ENCODE measurements at regions of chr2 and their contacts with region 1.

Region 1: DNA sequence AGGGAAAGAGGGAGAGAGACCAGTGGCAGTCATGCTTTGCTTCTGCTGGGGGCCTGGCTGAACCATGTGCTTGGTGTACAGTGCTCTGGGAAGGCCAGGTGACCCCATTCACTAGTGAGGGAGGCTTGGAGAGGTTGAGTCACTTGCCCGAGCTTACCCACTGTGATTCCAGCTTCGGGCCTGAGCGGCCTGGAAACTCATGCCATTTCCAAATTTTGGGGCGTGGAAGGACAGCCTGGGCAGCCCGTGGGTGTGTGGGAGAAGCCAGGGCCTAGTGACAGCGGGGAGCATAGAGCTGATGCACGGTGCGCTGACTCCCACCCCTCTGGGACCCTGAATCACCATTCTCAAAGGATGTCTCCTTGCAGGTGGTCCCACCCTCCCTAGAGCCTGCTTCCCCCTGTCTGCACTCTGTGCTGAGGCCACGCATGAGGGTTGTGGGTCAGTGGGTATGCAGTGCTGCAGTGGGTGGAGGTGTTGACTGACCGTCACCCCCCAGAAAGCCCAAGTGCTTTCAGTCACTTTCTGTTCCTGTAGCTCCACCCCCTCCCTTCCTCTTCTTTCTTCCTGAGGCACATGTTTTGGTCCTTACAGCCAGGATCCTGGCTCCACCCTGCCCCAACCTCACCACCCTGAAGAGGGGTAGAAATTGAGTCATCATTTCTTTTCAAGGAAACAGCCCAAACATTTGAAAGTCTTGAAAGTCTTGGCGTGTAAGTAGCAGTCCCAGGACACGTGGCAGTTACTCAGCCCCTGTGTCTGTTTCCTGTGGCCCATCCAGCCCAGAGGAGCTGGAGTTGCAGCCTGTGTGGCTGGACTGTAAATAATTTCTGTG is 69.3 kb upstream of the MCFD2 start:
- DNase-seq: peak; percentile 94
- ATAC-seq: peak; percentile 69
- H3K4me3 ChIP-seq: no peak overlapping the region; the same call in 1 of the 2 replicates
- H3K27ac ChIP-seq: peak overlapping the region; percentile 95
- H3K4me1 ChIP-seq: peaks cover 47% of the 10 kb centered on the region
- H3K27me3 ChIP-seq: no peaks in the 10 kb centered on the region
- CTCF ChIP-seq: no peak

Region 2: GRCh38 chr2:46814149-46814961 is 170.5 kb before region 1 on chr2:
- CTCF ChIA-PET with region 1: no interaction called
- POLR2A ChIA-PET with region 1: no interaction called
- intact Hi-C with region 1: no loop called
- DNase-seq: no peak
- ATAC-seq: no peak
- H3K4me3 ChIP-seq: no peak overlapping the region
- H3K27ac ChIP-seq: no peak overlapping the region
- H3K4me1 ChIP-seq: peaks cover 14% of the 10 kb centered on the region
- H3K27me3 ChIP-seq: no peaks in the 10 kb centered on the region
- CTCF ChIP-seq: no peak

Region 3: DNA sequence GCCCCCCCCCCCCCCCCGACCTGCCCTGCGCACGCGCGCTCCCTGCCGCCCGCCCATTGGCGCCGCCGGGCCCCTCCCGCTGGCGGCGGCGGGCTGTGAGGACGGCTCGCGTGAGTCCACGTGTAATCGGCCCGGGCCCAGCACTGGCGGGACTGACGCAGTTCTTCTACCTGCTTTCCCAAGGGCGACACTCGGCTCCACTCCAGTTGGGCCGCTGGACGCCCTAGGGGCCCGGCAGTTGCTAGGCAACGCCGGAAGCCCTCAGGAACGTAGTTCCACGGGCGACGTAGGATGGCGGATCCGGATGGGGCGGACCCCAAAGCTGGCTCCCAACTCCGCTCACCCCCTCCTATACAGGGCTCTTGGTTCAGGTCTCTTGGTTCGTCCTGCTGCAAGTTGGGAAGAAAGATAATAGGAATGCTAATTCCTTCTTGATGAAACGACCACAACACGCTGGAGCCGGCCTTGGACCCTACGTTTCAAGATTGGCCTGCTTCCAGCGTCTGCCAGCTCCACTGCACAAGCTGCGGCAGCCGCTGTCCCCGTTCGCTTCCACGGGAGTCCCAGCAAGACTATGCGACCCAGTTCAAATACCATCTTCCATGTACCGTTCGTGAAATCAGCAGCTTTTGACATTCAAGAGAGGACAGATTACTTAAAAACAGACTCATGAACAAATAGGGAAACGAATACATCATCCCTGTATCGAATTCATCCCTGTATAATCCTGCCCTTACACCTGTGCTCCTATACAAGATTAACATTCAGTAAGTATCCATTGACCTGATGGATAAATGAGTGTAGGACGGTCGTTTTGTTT is 68.8 kb before region 1 on chr2:
- CTCF ChIA-PET with region 1: no interaction called
- POLR2A ChIA-PET with region 1: no interaction called
- intact Hi-C with region 1: loop called (anchors 1 kb)
- DNase-seq: peak; percentile 92
- ATAC-seq: peak; percentile 77
- H3K4me3 ChIP-seq: peak overlapping the region; percentile 79
- H3K27ac ChIP-seq: peak overlapping the region; percentile 79
- H3K4me1 ChIP-seq: peaks cover 39% of the 10 kb centered on the region
- H3K27me3 ChIP-seq: no peaks in the 10 kb centered on the region
- CTCF ChIP-seq: no peak

Region 4: DNA sequence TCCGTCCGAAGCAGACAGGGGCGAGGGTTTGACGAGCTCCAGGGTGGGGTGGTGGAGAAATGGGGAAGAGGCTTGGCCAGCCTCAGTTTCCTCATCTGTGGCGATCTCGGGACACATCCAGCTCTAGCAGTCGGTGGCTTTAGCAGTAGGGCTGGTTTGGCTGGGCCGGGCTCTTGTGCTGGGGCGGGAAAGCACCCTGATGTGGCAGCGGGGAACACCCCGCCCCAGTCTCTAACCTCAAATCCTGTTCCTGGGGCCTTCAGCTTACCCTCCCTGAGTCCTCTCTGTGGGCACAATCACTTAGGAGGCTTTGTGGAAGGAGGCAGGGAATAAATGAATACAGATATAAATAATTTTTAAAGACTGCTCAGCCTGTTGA is 42.7 kb before region 1 on chr2:
- CTCF ChIA-PET with region 1: no interaction called
- POLR2A ChIA-PET with region 1: no interaction called
- intact Hi-C with region 1: loop called (anchors 1 kb)
- DNase-seq: peak; percentile 35
- ATAC-seq: peak; percentile 14
- H3K4me3 ChIP-seq: peak overlapping the region; percentile 99
- H3K27ac ChIP-seq: peak overlapping the region; percentile 39; the same call in 1 of the 2 replicates
- H3K4me1 ChIP-seq: peaks cover 9% of the 10 kb centered on the region
- H3K27me3 ChIP-seq: no peaks in the 10 kb centered on the region
- CTCF ChIP-seq: no peak

Region 5: DNA sequence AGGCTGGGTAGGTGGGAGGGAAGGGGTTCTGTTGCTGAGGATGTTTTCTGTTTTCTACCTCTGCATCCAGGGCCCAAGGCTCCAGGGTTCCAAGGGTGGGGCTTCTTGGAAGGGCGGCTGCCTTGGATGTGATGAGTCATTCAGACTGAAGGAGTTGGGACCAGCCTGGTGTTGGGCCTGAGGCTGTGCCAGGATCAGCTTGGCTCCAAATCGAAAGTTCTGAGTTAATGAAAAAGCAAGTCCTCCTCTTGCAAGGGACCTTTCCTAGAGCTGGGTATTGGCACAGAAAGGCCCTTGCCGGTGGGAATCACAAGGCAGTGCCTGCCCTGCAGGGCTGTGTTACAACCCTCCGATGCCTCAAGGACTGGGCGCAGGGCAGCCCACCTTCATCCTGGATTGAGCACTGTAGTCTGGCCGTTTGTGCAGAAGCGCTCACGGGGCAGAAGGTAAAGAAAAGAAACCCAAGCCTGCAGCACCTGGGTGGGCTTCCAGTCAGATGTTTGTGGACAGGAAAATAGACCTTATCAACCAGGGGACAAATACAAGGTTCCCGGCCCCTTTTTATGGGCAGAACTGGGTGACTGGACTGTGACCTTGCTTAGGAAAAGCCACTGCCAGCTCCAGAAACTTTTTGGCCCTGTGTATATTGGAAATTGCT is 16.7 kb before region 1 on chr2:
- CTCF ChIA-PET with region 1: no interaction called
- POLR2A ChIA-PET with region 1: no interaction called
- intact Hi-C with region 1: loop called (anchors 1 kb)
- DNase-seq: peak; percentile 87
- ATAC-seq: peak; percentile 79
- H3K4me3 ChIP-seq: peak overlapping the region; percentile 56
- H3K27ac ChIP-seq: peak overlapping the region; percentile 98
- H3K4me1 ChIP-seq: peaks cover 67% of the 10 kb centered on the region
- H3K27me3 ChIP-seq: no peaks in the 10 kb centered on the region
- CTCF ChIP-seq: no peak

Region 6: DNA sequence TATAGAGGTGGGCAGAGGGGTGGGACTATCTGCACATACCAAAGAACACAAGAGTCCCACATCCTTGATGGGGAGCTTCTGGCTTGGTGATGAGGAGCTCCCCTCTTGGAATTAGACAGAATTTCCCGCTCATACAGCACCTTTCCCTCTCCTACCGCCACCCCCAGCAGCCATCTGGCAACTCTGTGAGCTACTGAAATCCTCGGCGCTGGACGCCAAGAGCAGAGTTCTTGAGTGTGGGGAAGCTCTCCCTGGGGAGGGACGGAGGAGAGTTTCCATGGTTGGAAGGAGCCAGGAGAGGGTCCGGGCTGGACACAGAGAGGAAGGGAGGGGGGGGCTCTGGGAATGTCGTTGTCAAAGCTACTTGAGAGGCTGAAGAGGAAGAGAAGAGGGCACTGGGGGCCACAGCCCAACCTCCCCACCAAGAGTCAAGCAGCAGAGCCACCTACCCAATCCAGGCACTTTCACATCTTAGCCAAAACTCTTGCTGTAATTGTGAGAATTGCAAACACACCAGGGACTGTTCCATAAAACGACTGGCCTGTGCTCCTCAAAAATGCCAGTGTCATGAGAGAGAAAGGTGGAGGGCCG is 20.1 kb after region 1 on chr2:
- CTCF ChIA-PET with region 1: no interaction called
- POLR2A ChIA-PET with region 1: interaction called, 18 read pairs
- intact Hi-C with region 1: no loop called
- DNase-seq: no peak
- ATAC-seq: no peak
- H3K4me3 ChIP-seq: no peak overlapping the region
- H3K27ac ChIP-seq: no peak overlapping the region
- H3K4me1 ChIP-seq: peaks cover 24% of the 10 kb centered on the region
- H3K27me3 ChIP-seq: no peaks in the 10 kb centered on the region
- CTCF ChIP-seq: no peak

Region 7: GRCh38 chr2:47069628-47070154 is 84.8 kb after region 1 on chr2:
- CTCF ChIA-PET with region 1: no interaction called
- POLR2A ChIA-PET with region 1: interaction called, 14 read pairs
- intact Hi-C with region 1: no loop called
- DNase-seq: peak; percentile 96
- ATAC-seq: peak; percentile 86
- H3K4me3 ChIP-seq: no peak overlapping the region
- H3K27ac ChIP-seq: peak overlapping the region; percentile 53; the same call in 1 of the 2 replicates
- H3K4me1 ChIP-seq: peaks cover 50% of the 10 kb centered on the region
- H3K27me3 ChIP-seq: no peaks in the 10 kb centered on the region
- CTCF ChIP-seq: no peak

Region 8: GRCh38 chr2:47201224-47201623 is 216.4 kb after region 1 on chr2:
- CTCF ChIA-PET with region 1: no interaction called
- POLR2A ChIA-PET with region 1: no interaction called
- intact Hi-C with region 1: no loop called
- DNase-seq: peak; percentile 60
- ATAC-seq: no peak
- H3K4me3 ChIP-seq: no peak overlapping the region
- H3K27ac ChIP-seq: no peak overlapping the region
- H3K4me1 ChIP-seq: peaks cover 50% of the 10 kb centered on the region
- H3K27me3 ChIP-seq: no peaks in the 10 kb centered on the region
- CTCF ChIP-seq: no peak

Region 9: DNA sequence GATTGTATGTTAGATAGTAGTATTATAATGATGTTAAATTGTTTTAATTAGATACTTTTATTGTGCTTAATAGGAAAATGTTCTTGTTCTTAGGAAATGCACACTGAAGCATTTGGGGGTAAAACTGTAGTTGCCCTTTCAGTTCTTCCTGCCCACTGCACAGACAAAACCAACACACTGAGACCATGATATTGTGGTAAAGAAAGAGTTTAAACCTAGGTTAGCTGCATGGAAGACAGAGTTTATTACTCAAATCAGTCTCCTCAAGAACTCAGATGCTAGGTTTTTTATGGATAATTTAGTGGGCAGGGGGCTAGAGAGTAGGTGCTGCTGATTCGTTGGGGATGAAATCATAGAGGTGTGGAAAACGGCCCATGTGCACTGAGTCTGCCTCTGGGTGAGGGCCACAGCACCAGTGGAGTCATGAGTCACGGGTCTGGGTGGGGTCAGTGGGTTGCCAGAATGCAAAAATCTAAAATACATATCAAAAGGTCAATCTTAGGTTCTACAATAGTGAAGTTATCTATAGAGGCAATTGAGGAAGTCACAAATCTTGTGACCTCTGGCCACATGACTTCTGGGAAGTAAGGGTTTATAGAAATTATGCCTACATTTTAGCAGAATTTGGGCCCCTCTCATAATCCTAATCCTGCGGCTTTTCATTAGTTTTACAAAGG is 1204.8 kb after region 1 on chr2:
- CTCF ChIA-PET with region 1: no interaction called
- POLR2A ChIA-PET with region 1: no interaction called
- intact Hi-C with region 1: no loop called
- DNase-seq: no peak
- ATAC-seq: no peak
- H3K4me3 ChIP-seq: no peak overlapping the region
- H3K27ac ChIP-seq: no peak overlapping the region
- H3K4me1 ChIP-seq: no peaks in the 10 kb centered on the region
- H3K27me3 ChIP-seq: no peaks in the 10 kb centered on the region
- CTCF ChIP-seq: no peak

Measured in PC-3 (cell line).